H1 (cell line): ENCODE measurements at regions of chr14 and their contacts with region 1.

Region 1: GRCh38 chr14:55136885-55137786 is 8.1 kb downstream of the LGALS3 start:
- DNase-seq: no peak
- H3K4me3 ChIP-seq: no peak overlapping the region
- H3K27ac ChIP-seq: no peak overlapping the region
- H3K4me1 ChIP-seq: no peaks in the 10 kb centered on the region
- H3K27me3 ChIP-seq: no peaks in the 10 kb centered on the region
- CTCF ChIP-seq: no peak
- EP300 ChIP-seq: no peak
- POLR2A ChIP-seq: no peak
- RAD21 ChIP-seq: no peak

Region 2: GRCh38 chr14:55085060-55085660 is 52.0 kb before region 1 on chr14:
- CTCF ChIA-PET with region 1: interaction called, 21 read pairs
- POLR2A ChIA-PET with region 1: interaction called, 3 read pairs
- DNase-seq: peak in 1 of 2 experiments; percentile 23
- H3K4me3 ChIP-seq: no peak overlapping the region
- H3K27ac ChIP-seq: no peak overlapping the region
- H3K4me1 ChIP-seq: no peaks in the 10 kb centered on the region
- H3K27me3 ChIP-seq: no peaks in the 10 kb centered on the region
- CTCF ChIP-seq: no peak
- EP300 ChIP-seq: no peak
- POLR2A ChIP-seq: no peak
- RAD21 ChIP-seq: no peak

Region 3: DNA sequence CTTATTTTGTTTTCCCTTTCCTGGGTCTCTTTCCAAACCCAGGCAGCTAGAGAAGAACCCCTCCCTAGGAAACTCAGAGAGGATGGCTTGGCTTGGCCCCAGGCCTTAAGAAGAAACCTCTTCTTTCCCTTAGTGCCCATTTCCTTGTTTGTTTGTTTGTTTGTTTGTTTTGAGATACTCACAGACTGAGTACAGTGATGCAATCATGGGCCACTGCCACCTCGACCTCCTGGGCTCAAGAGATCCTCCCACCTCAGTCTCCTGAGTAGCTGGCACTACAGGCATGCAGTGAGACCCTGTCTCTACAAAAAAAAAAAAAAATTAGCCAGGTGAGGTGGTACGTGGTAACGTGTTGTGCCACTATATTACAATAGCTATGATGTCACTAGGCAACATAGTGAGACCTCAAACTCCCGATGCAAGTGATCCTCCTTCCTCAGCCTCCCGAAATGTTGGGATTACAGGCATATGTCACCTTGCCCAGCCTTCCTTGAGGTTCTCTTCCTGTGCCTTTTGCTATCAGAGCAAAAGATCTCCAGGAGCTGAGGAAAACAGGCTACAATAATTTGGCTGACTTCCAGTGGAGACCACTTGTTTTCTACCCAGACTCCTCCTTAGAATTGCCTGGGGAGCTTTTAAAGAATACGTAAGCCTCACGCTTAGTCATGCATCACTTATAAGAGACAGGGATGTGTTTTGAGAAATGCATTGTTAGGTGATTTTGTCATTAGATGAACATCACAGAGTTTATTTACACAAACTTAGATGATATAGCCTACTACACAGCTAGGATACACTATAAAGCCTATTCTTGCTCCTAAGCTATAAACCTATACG is 42.6 kb before region 1 on chr14:
- CTCF ChIA-PET with region 1: interaction called, 29 read pairs
- POLR2A ChIA-PET with region 1: interaction called, 4 read pairs
- DNase-seq: no peak
- H3K4me3 ChIP-seq: no peak overlapping the region
- H3K27ac ChIP-seq: no peak overlapping the region
- H3K4me1 ChIP-seq: no peaks in the 10 kb centered on the region
- H3K27me3 ChIP-seq: no peaks in the 10 kb centered on the region
- CTCF ChIP-seq: no peak
- EP300 ChIP-seq: no peak
- POLR2A ChIP-seq: no peak
- RAD21 ChIP-seq: no peak

Region 4: GRCh38 chr14:55102141-55102621 is 35.0 kb before region 1 on chr14:
- CTCF ChIA-PET with region 1: interaction called, 29 read pairs
- POLR2A ChIA-PET with region 1: interaction called, 9 read pairs
- DNase-seq: peak in 1 of 2 experiments; percentile 49
- H3K4me3 ChIP-seq: peak overlapping the region in 1 of 4 experiments; percentile 34; a peak in 2 of 8 replicates
- H3K27ac ChIP-seq: no peak overlapping the region
- H3K4me1 ChIP-seq: peaks cover 7 to 19% (median 12%) of the 10 kb centered on the region in 4 experiments; a peak in 5 of 7 replicates
- H3K27me3 ChIP-seq: no peaks in the 10 kb centered on the region
- CTCF ChIP-seq: no peak
- EP300 ChIP-seq: no peak
- POLR2A ChIP-seq: peak in 1 of 2 experiments; percentile 49; a peak in 1 of 3 replicates
- RAD21 ChIP-seq: no peak

Region 5: DNA sequence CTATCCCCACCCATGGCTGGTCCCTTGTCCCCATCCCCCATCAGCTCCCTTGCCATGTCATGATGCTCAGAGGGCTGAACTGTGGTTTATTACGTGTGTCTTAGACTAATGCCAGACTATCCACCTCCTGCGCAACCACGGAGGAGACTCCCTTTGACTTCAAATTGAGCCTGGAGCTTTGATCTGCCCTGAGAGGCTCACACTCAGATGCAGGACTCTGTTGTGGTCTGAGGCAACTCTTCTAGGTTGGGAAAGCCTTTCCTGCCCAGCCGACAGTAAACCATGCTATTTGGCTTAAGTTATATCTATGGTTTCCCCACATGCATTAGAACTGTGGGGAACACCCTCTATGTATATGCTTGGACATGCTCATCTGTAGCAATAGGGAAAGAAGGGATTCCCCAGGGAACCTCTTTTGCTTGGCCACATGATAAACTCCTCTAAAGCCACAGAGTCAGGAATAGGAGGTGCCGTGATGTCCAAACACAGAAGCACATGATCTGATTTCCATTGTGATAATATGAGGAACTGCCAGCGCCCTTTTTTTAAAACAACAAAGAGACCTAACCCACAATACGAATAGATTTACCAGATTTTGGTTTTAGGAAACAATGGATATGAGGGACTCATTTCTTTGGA is 19.2 kb before region 1 on chr14:
- CTCF ChIA-PET with region 1: interaction called, 18 read pairs
- POLR2A ChIA-PET with region 1: interaction called, 3 read pairs
- DNase-seq: no peak
- H3K4me3 ChIP-seq: no peak overlapping the region
- H3K27ac ChIP-seq: no peak overlapping the region
- H3K4me1 ChIP-seq: peaks cover 0 to 3% (median 1%) of the 10 kb centered on the region in 4 experiments; a peak in 3 of 7 replicates
- H3K27me3 ChIP-seq: no peaks in the 10 kb centered on the region; a peak in 1 of 7 replicates
- CTCF ChIP-seq: no peak
- EP300 ChIP-seq: no peak
- POLR2A ChIP-seq: no peak
- RAD21 ChIP-seq: no peak

Region 6: DNA sequence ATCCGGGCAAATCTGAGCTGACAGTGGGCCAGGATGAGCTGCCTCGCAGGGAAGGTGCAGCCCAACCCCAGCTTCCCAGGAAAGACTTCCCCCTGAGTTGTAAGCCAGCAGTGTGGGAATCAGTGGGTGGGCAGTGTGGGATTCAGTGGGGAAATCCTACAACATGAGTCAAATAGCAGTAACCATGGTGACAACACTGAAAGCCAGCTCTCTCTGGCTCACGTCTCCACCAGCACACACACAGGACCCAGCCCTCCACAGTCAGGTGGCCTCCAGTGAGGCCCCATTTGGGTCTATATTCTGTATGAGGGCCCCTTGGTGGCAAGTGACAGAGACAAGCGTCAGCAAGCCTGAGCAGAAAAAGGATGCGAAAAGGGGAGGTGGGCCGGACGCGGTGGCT is 14.0 kb before region 1 on chr14:
- CTCF ChIA-PET with region 1: interaction called, 18 read pairs
- POLR2A ChIA-PET with region 1: interaction called, 3 read pairs
- DNase-seq: no peak
- H3K4me3 ChIP-seq: no peak overlapping the region
- H3K27ac ChIP-seq: no peak overlapping the region
- H3K4me1 ChIP-seq: no peaks in the 10 kb centered on the region
- H3K27me3 ChIP-seq: peaks cover 0 to 4% (median 2%) of the 10 kb centered on the region in 4 experiments; a peak in 5 of 7 replicates
- CTCF ChIP-seq: no peak
- EP300 ChIP-seq: no peak
- POLR2A ChIP-seq: no peak
- RAD21 ChIP-seq: no peak